ENCODE measurements at regions of chr12 and their contacts with region 1.

Region 1: DNA sequence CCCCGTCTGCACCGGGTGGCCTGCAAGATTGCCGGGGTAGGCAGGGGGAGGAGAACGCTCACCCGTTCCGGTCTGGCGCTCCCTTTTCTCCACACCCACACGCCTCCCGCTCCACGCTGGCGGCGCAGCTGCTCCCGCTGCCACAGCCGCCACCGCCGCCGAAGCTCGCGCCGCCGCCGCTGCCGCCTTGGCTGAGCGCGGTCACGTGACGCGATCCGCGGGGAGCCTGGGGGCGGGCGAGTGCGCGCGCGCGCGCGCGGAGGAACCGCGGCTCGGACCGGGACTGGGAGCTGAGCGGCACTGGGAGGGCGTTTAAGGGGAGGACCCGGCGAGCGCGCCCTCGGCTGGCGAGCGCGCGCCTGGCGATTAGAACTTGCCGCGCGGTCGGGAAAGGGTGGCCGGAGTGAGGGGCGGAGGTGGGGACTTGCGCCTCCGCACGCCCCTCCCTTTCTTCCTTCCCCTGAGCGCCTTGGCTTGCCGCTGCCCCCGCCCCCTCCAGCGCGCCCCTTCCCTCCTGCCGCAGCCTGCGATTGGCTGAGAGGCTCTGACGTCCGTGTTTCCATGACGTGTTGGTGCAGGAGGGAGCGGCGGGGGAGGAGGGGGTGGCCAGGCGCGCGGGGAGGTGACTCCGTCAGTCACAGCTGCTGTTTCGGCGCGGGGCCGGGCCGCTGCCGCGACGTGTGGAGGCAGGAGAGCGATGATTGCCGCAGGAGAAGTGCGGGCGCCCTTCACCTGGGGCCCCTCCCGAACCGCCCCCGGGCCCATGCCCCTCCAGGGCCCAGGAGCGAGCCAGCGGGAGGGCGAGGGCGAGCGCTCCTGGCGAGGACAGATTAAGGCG is 738 bp upstream of the ATP2B1 start:
- DNase-seq: peak; percentile 99
- H3K4me3 ChIP-seq: peak overlapping the region; percentile 48 to 75 (median 73)
- H3K27ac ChIP-seq: peak overlapping the region; percentile 67
- H3K4me1 ChIP-seq: peaks cover 12% of the 10 kb centered on the region
- H3K27me3 ChIP-seq: peaks cover 0 to 16% of the 10 kb centered on the region in 2 experiments
- CTCF ChIP-seq: peak in 1 of 2 donors; percentile 16
- POLR2A ChIP-seq: no peak

Region 2: DNA sequence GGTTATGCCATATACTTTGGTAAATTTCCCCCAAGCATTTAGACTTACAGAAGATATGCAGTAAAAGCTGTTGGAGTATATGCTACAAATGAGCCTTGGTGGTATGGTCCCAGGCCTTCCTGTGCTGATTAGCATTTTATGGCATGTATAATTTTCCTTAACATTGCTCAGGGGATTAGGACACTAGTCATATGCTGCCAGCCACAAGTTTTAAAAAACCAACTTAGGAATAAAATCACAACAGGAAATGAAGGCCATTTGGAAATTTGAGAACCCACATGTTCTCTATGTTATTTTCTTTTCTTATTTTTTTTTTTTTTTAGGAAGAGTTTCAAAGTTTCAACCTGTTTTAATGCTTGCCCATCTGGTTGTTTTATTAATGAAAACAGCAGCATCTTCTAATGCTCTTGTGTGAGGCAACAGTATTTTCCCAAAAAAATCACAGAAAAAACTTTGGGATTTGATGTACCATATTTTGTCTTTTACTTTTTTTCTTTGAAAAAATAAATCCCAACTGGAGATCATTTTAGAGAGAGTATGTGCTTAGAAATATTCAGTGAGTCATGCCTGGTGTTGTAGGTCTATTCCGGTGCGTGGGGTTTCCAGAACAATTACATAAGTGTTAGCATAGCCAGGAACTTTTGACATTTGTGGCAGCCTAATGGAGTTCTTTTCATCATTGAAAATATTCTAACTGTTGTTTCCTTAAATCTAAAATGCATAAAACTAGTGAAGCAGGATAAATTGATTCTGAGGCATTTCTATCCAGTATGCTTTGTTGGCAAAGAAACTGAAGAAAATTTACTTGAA is 335.4 kb before region 1 on chr12:
- CTCF ChIA-PET with region 1: no interaction called
- POLR2A ChIA-PET with region 1: no interaction called
- dilution Hi-C with region 1: no loop called
- intact Hi-C with region 1: loop called (anchors 5 kb)
- DNase-seq: peak; percentile 90
- H3K4me3 ChIP-seq: no peak overlapping the region
- H3K27ac ChIP-seq: peak overlapping the region; percentile 90
- H3K4me1 ChIP-seq: peaks cover 78% of the 10 kb centered on the region
- H3K27me3 ChIP-seq: no peaks in the 10 kb centered on the region
- CTCF ChIP-seq: no peak
- POLR2A ChIP-seq: no peak

Region 3: DNA sequence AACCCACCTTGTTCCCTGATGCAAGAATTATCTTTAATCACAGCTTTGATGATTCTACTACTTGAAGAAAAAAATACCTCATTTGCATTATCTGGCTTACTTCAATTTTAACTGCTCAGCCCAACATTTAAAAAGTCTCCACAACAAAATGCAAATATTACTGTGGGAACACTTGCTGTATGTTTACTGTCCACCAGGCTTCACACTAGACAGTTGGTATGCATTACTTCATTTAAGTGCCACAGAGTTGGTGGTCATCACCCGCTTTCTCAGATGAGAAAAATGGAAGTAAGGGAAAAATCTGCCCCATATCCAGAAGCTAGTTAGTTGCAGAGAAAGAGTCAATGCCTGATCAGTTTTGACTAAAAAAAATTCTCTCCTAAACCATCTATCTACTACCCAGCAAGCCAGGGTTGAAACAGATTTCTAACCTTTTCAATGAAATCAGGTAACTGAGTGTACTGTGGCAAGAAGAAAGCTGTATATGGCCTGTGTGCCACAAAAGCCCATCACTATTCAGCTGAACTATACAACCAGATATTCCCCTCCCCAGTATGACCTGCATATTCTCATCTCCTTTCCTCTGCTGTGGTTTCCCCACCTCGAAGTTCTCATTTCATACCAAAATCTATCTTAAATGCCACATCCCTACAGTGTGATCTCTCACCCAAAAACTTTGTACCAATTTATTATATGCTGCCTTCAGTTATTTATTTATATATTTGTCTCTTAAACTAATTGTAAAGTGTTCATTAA is 91.1 kb before region 1 on chr12:
- CTCF ChIA-PET with region 1: no interaction called
- POLR2A ChIA-PET with region 1: no interaction called
- dilution Hi-C with region 1: no loop called
- intact Hi-C with region 1: no loop called
- DNase-seq: no peak
- H3K4me3 ChIP-seq: no peak overlapping the region
- H3K27ac ChIP-seq: no peak overlapping the region
- H3K4me1 ChIP-seq: peaks cover 3% of the 10 kb centered on the region
- H3K27me3 ChIP-seq: no peaks in the 10 kb centered on the region
- CTCF ChIP-seq: no peak
- POLR2A ChIP-seq: no peak

Region 4: DNA sequence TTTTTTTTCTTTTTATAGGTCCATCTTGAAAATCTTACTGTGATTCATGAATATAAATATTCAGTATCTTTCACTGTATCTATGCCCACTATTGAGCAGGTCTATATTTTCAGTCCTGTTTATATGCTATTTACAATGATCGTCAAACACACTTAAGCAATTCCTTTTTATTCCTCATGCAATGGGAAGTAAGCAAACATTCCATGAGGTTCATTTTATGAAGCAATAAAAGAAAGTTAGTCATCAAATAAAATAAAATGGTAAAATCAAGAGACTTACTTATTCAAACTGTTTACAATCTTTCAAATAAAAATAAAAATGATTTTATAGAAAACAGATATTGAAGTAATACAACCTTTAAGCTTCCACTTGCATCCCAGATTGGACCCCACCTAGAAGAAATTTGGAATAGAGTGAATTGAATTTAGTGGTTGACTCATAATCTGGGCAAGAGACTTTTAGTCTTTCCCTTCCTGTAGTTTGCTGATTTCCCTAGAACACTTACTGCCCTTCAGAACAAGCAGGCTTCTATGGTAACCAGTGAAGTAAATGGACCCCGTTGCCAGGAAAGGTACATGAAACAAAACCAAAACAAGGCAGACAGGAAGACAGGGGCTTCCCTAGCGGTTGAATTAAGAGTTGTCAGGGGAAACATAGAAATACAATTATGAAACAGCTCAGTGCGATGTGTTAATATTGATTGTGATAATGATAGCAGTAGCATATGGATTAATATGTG is 240.2 kb after region 1 on chr12:
- CTCF ChIA-PET with region 1: interaction called, 4 read pairs
- POLR2A ChIA-PET with region 1: interaction called, 7 read pairs
- dilution Hi-C with region 1: no loop called
- intact Hi-C with region 1: loop called (anchors 1 kb)
- DNase-seq: peak; percentile 98
- H3K4me3 ChIP-seq: no peak overlapping the region
- H3K27ac ChIP-seq: peak overlapping the region; percentile 99
- H3K4me1 ChIP-seq: peaks cover 33% of the 10 kb centered on the region
- H3K27me3 ChIP-seq: no peaks in the 10 kb centered on the region
- CTCF ChIP-seq: peak; percentile 21 to 36
- POLR2A ChIP-seq: no peak

Region 5: DNA sequence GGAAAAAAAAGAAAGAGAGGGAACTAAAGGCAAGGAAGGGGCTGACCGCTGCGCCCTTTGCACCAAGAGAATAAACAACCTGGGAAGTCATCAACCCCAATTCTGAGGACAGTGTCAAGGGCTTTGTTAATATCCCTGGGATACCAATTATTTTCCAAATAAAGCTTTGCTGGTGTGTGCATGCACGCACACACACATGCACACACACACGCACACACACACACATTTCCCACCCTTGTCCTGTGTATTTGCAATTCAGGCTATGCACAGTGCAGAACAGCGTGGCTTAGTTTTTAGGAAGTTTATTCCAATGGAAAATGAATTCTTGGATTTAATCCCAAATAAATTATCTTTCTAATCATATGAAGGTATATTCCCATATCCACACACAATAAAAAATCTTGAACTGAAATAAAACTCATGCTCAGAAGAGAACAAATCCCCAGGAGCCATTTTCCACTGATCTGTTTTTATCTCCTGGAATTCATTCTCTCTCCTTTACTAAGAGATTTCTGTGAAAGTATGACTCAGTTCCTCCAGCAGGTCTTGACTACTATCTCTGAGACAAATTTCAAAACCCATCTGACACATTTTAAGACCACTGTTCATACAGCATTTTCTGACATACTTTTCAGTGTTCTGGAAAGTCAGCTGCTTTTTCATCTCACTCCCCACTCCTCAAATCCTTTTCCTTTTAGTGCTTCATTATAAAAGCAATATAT is 333.7 kb after region 1 on chr12:
- CTCF ChIA-PET with region 1: no interaction called
- POLR2A ChIA-PET with region 1: no interaction called
- dilution Hi-C with region 1: no loop called
- intact Hi-C with region 1: no loop called
- DNase-seq: peak; percentile 13
- H3K4me3 ChIP-seq: no peak overlapping the region
- H3K27ac ChIP-seq: no peak overlapping the region
- H3K4me1 ChIP-seq: no peaks in the 10 kb centered on the region
- H3K27me3 ChIP-seq: no peaks in the 10 kb centered on the region
- CTCF ChIP-seq: no peak
- POLR2A ChIP-seq: no peak

Region 6: DNA sequence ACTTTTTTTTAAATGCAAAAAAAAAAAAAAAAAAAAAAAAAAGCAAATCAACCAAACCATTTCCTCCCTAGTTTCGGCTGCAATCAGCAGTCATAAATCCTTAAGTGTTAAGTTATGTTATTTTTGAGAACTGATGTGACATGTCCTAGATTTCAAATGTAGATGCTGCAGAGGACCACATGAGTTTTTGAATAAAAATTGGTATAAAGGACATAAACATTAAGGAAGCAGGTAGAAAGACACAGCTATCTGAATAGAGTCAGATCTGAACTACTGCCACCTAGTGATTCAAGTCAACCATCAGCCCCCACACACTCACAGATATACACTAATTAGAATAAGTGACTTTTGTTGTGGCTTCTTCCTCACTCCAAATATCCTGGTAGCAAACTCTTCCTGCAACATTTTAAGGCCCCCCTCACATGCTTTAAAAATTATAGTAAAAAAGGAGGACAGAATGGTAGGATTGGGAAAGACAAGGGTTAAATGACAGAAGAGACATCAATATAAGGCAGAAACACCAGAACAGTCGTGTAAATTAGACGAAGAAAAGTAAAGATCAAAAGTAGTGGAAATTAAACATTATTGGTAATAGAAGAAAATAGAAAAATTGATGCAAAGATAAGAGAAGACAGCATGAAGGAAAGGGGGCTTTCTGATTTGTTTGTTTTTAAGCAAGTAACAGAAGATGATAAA is 393.7 kb after region 1 on chr12:
- CTCF ChIA-PET with region 1: interaction called, 14 read pairs
- POLR2A ChIA-PET with region 1: no interaction called
- dilution Hi-C with region 1: no loop called
- intact Hi-C with region 1: loop called (anchors 1 kb)
- DNase-seq: peak; percentile 63
- H3K4me3 ChIP-seq: no peak overlapping the region
- H3K27ac ChIP-seq: no peak overlapping the region
- H3K4me1 ChIP-seq: no peaks in the 10 kb centered on the region
- H3K27me3 ChIP-seq: no peaks in the 10 kb centered on the region
- CTCF ChIP-seq: peak; percentile 34 to 54
- POLR2A ChIP-seq: no peak

Region 7: GRCh38 chr12:90211017-90211416 is 501.6 kb after region 1 on chr12:
- CTCF ChIA-PET with region 1: no interaction called
- POLR2A ChIA-PET with region 1: no interaction called
- dilution Hi-C with region 1: no loop called
- intact Hi-C with region 1: loop called (anchors 2 kb)
- DNase-seq: peak; percentile 96
- H3K4me3 ChIP-seq: no peak overlapping the region
- H3K27ac ChIP-seq: peak overlapping the region; percentile 85
- H3K4me1 ChIP-seq: peaks cover 16% of the 10 kb centered on the region
- H3K27me3 ChIP-seq: no peaks in the 10 kb centered on the region
- CTCF ChIP-seq: no peak
- POLR2A ChIP-seq: peak; percentile 62

Region 8: GRCh38 chr12:90253674-90254181 is 544.4 kb after region 1 on chr12:
- CTCF ChIA-PET with region 1: no interaction called
- POLR2A ChIA-PET with region 1: no interaction called
- dilution Hi-C with region 1: no loop called
- intact Hi-C with region 1: loop called (anchors 1 kb)
- DNase-seq: peak; percentile 90
- H3K4me3 ChIP-seq: no peak overlapping the region
- H3K27ac ChIP-seq: peak overlapping the region; percentile 47
- H3K4me1 ChIP-seq: peaks cover 21% of the 10 kb centered on the region
- H3K27me3 ChIP-seq: no peaks in the 10 kb centered on the region
- CTCF ChIP-seq: peak; percentile 20 to 53
- POLR2A ChIP-seq: no peak

Region 9: DNA sequence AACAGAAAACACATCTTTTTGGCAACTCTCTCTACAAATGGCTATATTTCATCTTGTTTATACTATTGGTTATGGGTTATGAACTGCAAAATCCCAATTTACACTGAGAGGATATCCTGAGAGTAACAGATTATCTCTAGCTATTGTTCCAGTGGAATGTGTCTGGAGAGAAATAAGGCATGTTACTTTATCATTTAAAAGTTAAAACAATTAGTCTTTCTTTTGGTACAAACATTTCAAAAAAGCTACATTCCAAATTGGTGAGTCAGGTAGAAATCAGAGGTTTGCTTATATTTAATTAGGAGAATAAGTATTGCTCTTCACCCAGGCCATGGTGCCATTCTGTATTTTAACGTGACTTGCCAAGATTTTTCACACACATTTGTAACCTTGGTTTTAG is 834.0 kb after region 1 on chr12:
- CTCF ChIA-PET with region 1: no interaction called
- POLR2A ChIA-PET with region 1: no interaction called
- dilution Hi-C with region 1: no loop called
- intact Hi-C with region 1: loop called (anchors 5 kb)
- DNase-seq: peak; percentile 93
- H3K4me3 ChIP-seq: no peak overlapping the region
- H3K27ac ChIP-seq: peak overlapping the region; percentile 97
- H3K4me1 ChIP-seq: peaks cover 18% of the 10 kb centered on the region
- H3K27me3 ChIP-seq: no peaks in the 10 kb centered on the region
- CTCF ChIP-seq: no peak
- POLR2A ChIP-seq: peak; percentile 55